ENCODE measurements at regions of chr22 and their contacts with region 1.

Region 1: DNA sequence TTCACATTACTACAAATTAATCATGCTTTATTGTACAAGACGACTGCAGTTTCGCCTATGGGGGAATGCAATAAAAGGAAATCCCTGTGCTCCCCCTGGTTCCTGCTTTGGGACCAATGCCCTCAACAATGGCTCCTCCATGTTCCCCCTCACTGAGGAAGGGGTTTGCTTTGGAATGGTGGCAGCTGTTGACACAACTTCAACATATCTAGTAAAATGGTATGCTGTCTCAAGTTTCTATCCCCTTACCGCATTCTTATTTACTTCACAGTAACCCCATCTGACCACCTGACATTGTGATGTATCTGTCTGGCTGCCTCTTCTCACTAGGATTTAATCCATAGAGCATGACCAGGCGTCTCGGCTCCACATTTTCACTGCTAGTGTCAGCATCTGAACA is 48.8 kb downstream of the PIWIL3 start:
- DNase-seq: no peak
- ATAC-seq: no peak
- H3K4me3 ChIP-seq: no peak overlapping the region
- H3K27ac ChIP-seq: no peak overlapping the region
- H3K4me1 ChIP-seq: peaks cover 17 to 18% of the 10 kb centered on the region in 2 experiments
- H3K27me3 ChIP-seq: peaks cover 47% of the 10 kb centered on the region
- CTCF ChIP-seq: no peak
- POLR2A ChIP-seq: no peak
- RAD21 ChIP-seq: no peak

Region 2: GRCh38 chr22:24707470-24707801 is 18.3 kb before region 1 on chr22:
- CTCF ChIA-PET with region 1: no interaction called
- POLR2A ChIA-PET with region 1: no interaction called
- RAD21 ChIA-PET with region 1: no interaction called
- intact Hi-C with region 1: loop called (anchors 2 kb)
- DNase-seq: peak; percentile 6
- ATAC-seq: peak; percentile 80
- H3K4me3 ChIP-seq: no peak overlapping the region
- H3K27ac ChIP-seq: no peak overlapping the region
- H3K4me1 ChIP-seq: peaks cover 7 to 9% of the 10 kb centered on the region in 2 experiments
- H3K27me3 ChIP-seq: no peaks in the 10 kb centered on the region
- CTCF ChIP-seq: peak in 1 of 3 experiments; percentile 28; a peak in 1 of 6 replicates
- POLR2A ChIP-seq: no peak
- RAD21 ChIP-seq: peak; percentile 14; the same call in 1 of the 2 replicates

Region 3: GRCh38 chr22:25976356-25976755 is 1250.6 kb after region 1 on chr22:
- CTCF ChIA-PET with region 1: no interaction called
- POLR2A ChIA-PET with region 1: no interaction called
- RAD21 ChIA-PET with region 1: no interaction called
- intact Hi-C with region 1: no loop called
- DNase-seq: no peak
- ATAC-seq: no peak
- H3K4me3 ChIP-seq: no peak overlapping the region
- H3K27ac ChIP-seq: no peak overlapping the region
- H3K4me1 ChIP-seq: no peaks in the 10 kb centered on the region
- H3K27me3 ChIP-seq: peaks cover 44% of the 10 kb centered on the region
- CTCF ChIP-seq: no peak
- POLR2A ChIP-seq: no peak
- RAD21 ChIP-seq: no peak

Measured in HCT116 (cell line).